Ascending aorta (tissue), 2 donors: ENCODE measurements at regions of chr10 and their contacts with region 1.

Region 1: DNA sequence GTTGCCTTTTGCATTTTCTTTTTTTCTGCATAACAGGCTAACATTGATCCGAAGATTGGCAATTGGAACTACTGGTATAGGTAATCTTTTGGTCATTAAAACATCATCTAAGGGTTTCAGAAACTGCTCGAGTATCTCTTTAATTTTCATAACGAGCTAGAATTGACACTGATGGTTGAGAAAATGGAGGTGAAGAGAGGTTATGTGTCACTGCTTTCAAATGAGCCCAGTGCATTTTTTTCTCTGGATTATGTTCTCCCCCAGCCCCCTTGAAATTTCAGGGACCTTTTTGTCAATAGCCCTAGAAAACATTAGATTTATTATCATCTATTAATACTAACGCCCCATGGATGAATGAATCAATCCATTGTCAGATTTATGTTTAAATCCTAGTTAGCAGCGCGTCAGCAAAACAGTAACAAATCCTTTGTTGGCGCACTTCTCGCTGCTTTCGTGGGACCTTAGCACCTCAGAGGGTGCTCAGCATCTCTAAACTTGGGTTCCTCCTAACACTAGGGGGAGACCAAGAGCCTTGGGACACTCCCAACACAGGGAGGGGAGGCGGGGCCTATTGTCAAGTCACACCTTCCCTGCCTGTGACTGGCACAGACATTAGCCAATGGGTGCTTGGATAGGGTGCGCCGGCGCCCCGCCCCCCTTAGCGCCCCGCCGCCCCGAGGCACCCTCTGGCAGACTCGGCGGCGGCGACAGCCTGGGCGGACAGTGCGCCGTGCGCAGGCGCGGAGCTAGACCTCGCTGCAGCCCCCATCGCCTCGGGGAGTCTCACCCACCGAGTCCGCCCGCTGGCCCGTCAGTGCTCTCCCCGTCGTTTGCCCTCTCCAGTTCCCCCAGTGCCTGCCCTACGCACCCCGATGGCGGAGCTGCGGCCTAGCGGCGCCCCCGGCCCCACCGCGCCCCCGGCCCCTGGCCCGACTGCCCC is at the start of gene SUFU:
- DNase-seq: peak; percentile 96 to 99
- H3K4me3 ChIP-seq: peak within 1 kb of the TSS; percentile 93 to 100
- H3K27ac ChIP-seq: peak within 1 kb of the TSS; percentile 66 to 94
- H3K4me1 ChIP-seq: peaks cover 9 to 15% of the 10 kb centered on the region in 2 donors
- H3K27me3 ChIP-seq: no peaks in the 10 kb centered on the region
- CTCF ChIP-seq: peak; percentile 83 to 93 (median 87)
- total RNA-seq, gene SUFU: 17.3 TPM

Region 2: DNA sequence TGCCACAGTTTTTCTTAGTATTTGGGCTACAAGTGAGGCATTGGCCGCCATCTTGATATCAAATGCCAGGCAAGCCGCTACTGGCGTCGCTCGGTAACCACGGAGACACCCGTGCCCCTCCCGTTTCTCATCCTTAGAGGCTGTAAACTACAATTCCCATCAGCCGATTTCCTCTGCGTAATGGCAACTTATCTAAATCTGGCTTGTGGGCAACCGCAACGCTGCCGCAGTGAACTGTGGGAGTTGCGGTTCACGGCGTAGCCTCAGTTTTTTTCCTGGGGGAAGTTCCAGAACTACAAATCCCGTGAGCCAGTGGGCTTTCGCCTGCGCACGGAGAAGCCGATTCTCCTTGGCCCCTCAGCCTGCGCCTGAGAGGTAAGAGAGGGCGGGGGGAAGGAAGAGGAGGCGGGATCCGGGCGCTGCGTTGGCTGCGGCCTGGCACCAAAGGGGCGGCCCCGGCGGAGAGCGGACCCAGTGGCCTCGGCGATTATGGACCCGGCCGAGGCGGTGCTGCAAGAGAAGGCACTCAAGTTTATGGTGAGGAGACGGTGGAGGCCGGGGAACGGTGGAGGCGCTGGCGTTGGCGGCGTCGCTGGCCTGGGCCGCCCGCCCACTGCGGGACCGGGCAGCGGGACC is 1149.7 kb before region 1 on chr10 and contains the start of gene BTRC:
- intact Hi-C with region 1: loop called (anchors 10 kb)
- DNase-seq: peak; percentile 94 to 99
- H3K4me3 ChIP-seq: peak within 1 kb of the TSS; percentile 80 to 86
- H3K27ac ChIP-seq: peak within 1 kb of the TSS; percentile 83 to 84
- H3K4me1 ChIP-seq: peaks cover 0 to 13% of the 10 kb centered on the region in 2 donors
- H3K27me3 ChIP-seq: no peaks in the 10 kb centered on the region
- CTCF ChIP-seq: no peak
- total RNA-seq, gene BTRC: 0.96 TPM

Region 3: DNA sequence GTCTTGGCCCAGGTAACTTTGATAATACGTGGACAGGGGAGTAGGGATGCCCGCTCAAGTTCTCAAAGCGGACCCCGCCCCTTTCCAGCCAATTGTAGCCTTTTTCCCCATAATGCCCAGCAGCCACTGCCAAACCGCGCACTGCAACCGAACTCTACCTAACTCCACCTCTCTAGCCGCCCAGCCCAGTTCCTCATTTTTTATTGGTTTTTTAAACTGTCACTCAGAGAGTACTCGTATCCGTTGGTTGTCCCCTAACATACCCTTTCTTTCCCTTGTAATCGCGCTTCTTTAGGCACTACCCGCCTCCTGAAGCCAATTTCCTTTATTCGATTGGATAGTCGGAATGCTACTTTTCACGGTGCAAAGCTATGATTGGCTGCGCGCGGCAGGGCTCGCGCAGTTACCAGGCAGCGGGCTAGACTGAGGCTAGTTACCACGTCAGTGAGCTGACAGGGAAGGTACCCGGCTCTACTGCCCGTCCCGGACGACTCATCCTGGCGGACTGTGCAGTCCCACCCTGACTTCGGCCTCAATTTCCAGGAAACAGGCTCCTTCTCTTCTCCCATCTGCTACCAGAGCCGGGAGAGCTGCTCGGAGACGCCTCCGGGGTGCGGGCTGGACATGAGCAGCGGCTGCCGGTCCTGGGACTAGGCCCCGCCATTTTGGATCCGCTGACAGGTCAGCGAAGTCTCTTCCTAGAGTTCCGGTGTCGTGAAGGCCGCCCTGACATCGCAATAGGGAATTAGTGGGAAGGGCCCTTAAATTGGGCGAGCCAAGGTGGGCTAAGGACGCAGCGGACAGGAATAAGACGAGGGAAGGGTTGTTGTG is 258.2 kb before region 1 on chr10 and contains the start of gene GBF1:
- intact Hi-C with region 1: loop called (anchors 5 kb)
- DNase-seq: peak; percentile 89 to 97
- H3K4me3 ChIP-seq: peak within 1 kb of the TSS; percentile 66 to 92
- H3K27ac ChIP-seq: peak within 1 kb of the TSS; percentile 85 to 90
- H3K4me1 ChIP-seq: peaks cover 13 to 30% of the 10 kb centered on the region in 2 donors
- H3K27me3 ChIP-seq: no peaks in the 10 kb centered on the region
- CTCF ChIP-seq: no peak
- total RNA-seq, gene GBF1: 56.0 TPM

Region 4: DNA sequence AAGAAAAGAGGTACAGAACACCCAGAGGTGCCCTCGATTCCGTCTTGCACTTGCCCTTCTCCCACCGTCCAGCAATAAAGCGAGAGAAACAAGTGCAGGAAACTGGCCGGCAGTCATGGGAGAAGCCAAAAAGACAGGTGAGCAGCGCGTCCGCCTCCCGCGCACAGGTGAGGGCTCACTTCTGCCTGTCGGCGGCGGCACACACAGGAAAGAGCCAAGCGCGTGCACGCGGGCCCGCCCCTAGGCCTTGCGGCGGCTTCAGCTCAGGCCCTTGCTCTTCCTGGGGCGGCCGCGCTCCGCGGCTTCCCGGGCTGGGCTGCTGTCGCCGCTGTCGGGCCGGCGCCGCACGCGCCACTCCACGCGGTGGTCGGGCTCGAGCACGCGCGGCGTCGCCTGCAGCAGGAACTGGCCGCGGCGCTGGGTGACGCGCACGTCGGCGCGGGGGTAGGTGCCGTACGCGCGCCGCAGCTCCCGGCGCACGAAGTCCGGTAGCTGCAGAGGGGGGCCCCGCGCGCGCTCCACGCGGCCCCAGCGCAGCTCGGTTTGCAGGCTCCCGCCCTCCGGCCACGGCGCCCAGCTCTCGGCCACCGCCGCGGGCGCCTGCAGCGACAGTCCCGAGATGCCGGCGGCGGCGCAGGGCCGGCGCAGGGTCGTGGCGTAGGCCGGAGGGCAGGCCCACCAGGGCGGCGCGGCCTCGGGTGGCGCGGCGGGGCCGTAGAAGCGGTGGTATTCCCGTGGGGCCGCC is 53.2 kb before region 1 on chr10:
- intact Hi-C with region 1: loop called (anchors 2 kb)
- DNase-seq: peak in 1 of 2 donors; percentile 89
- H3K4me3 ChIP-seq: peak overlapping the region; percentile 89 to 94
- H3K27ac ChIP-seq: peak overlapping the region; percentile 77 to 87
- H3K4me1 ChIP-seq: peaks cover 5 to 12% of the 10 kb centered on the region in 2 donors
- H3K27me3 ChIP-seq: no peaks in the 10 kb centered on the region
- CTCF ChIP-seq: peak in 1 of 3 experiments; percentile 13

Region 5: DNA sequence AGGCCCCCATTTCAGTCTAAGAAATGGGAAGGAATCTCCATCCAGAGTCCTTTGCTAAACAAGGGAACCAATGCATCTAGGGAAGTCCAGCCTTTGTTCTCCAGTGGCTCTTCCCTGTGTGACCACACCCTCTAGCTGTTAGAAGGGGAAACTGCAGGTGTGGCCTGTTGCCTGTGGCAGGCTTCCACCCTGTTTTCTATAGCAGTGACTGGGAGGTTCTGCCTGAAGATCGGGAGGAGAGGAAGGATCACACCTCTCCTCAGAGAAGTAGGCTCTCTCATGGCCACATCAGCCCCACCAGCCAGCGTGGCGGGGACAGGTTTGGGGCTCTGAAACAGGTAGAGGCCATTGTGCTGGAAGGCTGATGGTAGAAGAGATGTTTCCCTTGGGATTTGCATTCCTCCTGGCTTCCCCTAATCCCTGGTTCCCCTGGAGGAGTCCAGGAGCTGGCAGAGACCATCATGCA is 93.0 kb after region 1 on chr10:
- intact Hi-C with region 1: loop called (anchors 5 kb)
- DNase-seq: no peak
- H3K4me3 ChIP-seq: no peak overlapping the region
- H3K27ac ChIP-seq: peak overlapping the region; percentile 54 to 68
- H3K4me1 ChIP-seq: peaks cover 13 to 32% of the 10 kb centered on the region in 2 donors
- H3K27me3 ChIP-seq: no peaks in the 10 kb centered on the region
- CTCF ChIP-seq: peak; percentile 38 to 68 (median 67)

Region 6: DNA sequence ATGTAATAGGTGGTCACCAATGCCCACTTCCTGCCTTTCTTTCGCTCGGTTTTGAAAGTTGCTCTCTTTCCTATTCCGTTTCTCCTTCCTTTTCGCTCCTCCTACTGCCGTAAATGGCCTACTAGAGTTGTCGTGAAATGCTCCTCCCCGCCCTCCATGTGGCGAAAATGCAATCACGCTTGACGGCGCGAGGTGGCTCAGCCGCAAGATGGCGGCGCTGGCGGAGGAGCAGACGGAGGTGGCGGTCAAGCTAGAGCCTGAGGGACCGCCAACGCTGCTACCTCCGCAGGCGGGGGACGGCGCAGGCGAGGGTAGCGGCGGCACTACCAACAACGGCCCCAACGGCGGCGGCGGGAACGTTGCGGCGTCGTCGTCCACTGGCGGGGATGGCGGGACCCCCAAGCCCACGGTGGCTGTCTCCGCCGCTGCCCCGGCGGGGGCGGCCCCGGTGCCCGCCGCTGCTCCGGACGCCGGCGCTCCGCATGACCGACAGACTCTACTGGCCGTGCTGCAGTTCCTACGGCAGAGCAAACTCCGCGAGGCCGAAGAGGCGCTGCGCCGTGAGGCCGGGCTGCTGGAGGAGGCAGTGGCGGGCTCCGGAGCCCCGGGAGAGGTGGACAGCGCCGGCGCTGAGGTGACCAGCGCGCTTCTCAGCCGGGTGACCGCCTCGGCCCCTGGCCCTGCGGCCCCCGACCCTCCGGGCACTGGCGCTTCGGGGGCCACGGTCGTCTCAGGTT is 864.4 kb after region 1 on chr10 and contains the start of gene TAF5:
- intact Hi-C with region 1: loop called (anchors 1 kb)
- DNase-seq: peak; percentile 64 to 96
- H3K4me3 ChIP-seq: peak within 1 kb of the TSS; percentile 83 to 99
- H3K27ac ChIP-seq: peak within 1 kb of the TSS; percentile 78 to 91
- H3K4me1 ChIP-seq: peaks cover 0 to 11% of the 10 kb centered on the region in 2 donors
- H3K27me3 ChIP-seq: no peaks in the 10 kb centered on the region
- CTCF ChIP-seq: peak in 1 of 3 experiments; percentile 10
- total RNA-seq, gene TAF5: 2.4 TPM